Activated CD4-positive, alpha-beta memory T cell treated with anti-CD3 and anti-CD28 coated beads for 36 hours (primary cell): ENCODE measurements at regions of chr16 and their contacts with region 1.

Region 1: DNA sequence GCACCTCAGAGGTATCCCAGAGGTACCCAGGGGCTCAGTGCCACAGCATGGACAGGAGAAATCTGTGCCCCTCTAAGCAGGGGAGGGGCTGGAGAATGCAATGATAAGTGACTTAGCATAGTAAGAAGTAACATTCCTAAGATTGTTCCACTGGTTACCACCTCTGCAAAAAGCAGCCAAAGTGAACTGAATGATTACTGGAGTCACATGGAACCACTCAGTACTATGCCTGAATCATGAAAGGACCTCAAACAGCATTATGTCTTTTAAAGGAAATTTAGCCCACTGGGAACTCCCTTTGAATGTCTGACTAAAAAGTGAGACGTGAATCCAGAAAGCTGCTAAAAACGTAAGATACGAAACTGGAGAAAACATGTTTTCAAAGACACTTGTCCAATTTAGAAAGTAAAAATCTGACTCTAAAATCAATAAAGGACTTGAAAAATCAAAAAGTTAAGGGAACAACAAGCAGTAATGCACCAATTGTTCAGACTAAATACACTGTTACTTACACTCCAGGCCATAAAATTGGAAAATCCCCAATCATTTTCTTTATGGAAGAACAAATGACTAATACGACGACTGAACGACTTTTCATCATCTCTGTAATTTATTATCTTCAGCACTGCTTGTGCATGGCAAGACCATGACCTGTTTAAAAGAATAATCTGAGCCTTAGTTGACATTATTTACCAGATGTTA is 38.6 kb downstream of the LITAFD start:
- DNase-seq: no peak
- H3K4me3 Mint-ChIP-seq: no peak overlapping the region
- H3K27ac Mint-ChIP-seq: peak overlapping the region; percentile 78
- H3K4me1 Mint-ChIP-seq: peaks cover 74% of the 10 kb centered on the region
- H3K27me3 Mint-ChIP-seq: no peaks in the 10 kb centered on the region

Region 2: GRCh38 chr16:8892101-8892575 is 28.7 kb before region 1 on chr16:
- CTCF ChIA-PET with region 1: no interaction called
- POLR2A ChIA-PET with region 1: interaction called, 4 read pairs
- intact Hi-C with region 1: loop called (anchors 2 kb)
- DNase-seq: peak; percentile 54
- H3K4me3 Mint-ChIP-seq: peak overlapping the region; percentile 58
- H3K27ac Mint-ChIP-seq: peak overlapping the region; percentile 97
- H3K4me1 Mint-ChIP-seq: peaks cover 26% of the 10 kb centered on the region
- H3K27me3 Mint-ChIP-seq: no peaks in the 10 kb centered on the region

Region 3: GRCh38 chr16:8958344-8959167 is 37.8 kb after region 1 on chr16:
- CTCF ChIA-PET with region 1: interaction called, 3 read pairs
- POLR2A ChIA-PET with region 1: interaction called, 3 read pairs
- intact Hi-C with region 1: loop called (anchors 2 kb)
- DNase-seq: peak; percentile 57
- H3K4me3 Mint-ChIP-seq: peak overlapping the region; percentile 54
- H3K27ac Mint-ChIP-seq: peak overlapping the region; percentile 86
- H3K4me1 Mint-ChIP-seq: peaks cover 81% of the 10 kb centered on the region
- H3K27me3 Mint-ChIP-seq: no peaks in the 10 kb centered on the region